Adrenal gland (tissue), 19 donors: ENCODE measurements at regions of chr3 and their contacts with region 1.

Region 1: DNA sequence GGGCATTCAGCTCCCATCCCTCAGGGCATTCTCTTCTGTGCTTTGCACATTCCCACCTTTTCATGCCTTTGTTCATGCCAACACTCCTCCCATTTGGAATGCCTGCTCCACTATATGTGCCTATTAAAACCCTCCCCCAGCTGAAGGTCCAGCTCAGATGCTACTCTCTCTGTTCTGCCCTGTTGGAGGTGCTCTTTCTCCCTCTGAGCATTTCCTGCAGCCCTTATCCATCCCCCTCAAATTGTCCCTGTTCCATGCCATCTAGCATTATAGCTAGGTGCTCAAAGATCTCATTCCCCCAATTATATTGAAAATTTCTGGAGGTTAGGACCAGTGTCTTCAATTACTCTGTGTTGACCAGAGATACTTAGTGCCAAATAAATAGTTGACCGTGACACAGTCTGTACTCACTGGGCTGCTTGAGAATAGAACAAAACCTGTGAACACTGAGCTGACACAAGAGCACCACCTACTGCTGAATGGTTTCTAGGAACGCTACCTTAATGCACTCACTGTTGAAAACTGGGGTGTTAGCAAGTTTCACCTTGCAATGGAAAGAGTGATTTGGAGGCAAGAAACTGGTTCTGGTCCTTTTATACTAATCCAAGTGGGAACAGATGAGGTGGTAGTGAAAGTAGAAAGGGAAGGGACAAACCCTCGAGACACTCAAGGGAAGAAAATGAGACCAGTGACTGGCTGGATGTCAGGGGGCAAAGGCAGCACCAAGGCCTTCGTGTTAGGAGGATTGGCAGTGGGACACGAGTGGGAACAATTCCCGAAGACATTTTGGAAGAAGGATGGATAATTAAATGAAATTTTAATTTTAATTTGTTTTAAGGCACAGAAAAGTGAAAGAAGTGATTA is 289.8 kb upstream of the ROPN1 start:
- DNase-seq: peak in 5 of 7 donors; percentile 26 to 69 (median 57)
- H3K4me3 ChIP-seq: no peak overlapping the region
- H3K27ac ChIP-seq: no peak overlapping the region
- H3K4me1 ChIP-seq: peaks cover 4 to 16% of the 10 kb centered on the region in 2 donors
- H3K27me3 ChIP-seq: no peaks in the 10 kb centered on the region
- CTCF ChIP-seq: peak; percentile 41 to 78 (median 68)
- POLR2A ChIP-seq: no peak

Region 2: GRCh38 chr3:123899300-123899865 is 382.3 kb before region 1 on chr3:
- intact Hi-C with region 1: no loop called
- DNase-seq: no peak
- H3K4me3 ChIP-seq: no peak overlapping the region
- H3K27ac ChIP-seq: no peak overlapping the region
- H3K4me1 ChIP-seq: no peaks in the 10 kb centered on the region
- H3K27me3 ChIP-seq: no peaks in the 10 kb centered on the region
- CTCF ChIP-seq: no peak
- POLR2A ChIP-seq: no peak

Region 3: DNA sequence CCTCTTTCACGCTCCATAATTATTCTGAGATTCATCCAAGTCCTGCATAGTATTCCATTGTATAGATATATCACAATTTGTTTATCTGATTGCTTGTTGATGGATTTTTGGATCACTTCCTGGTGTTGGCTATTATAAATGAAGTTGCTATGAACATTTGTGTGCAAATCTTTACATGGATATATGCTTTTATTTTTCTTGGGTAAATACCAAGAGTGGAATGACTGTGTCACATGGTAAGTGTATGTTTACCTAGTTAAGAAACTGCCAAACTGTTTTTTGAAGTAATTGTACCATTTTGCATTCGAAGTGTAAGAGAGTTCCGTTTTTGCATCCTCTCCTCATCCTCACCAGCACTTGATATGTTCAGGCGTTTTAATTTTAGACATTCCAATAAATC is 255.2 kb before region 1 on chr3:
- intact Hi-C with region 1: loop called in 1 of 2 experiments (anchors 10 kb)
- DNase-seq: no peak
- H3K4me3 ChIP-seq: no peak overlapping the region
- H3K27ac ChIP-seq: no peak overlapping the region
- H3K4me1 ChIP-seq: no peaks in the 10 kb centered on the region
- H3K27me3 ChIP-seq: peaks cover 4% of the 10 kb centered on the region
- CTCF ChIP-seq: no peak
- POLR2A ChIP-seq: no peak

Region 4: DNA sequence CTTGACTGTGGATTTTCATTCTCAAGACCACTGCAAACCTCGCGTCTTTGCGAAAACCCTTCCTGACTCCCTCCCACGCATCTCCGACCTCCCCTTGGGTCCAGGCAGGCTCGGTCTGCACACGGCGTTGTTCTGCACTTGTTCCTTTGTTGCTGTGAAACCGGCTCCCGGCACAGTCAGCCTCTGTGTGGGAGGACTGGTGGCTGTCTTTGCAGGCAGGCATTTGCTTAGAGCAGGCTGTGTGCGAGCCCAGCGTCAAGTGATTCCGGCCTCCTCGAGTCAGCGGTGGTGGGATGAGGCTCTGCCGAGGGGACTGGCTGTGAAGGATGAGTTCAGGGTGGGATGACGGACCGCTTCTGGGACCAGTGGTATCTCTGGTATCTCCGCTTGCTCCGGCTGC is 187.2 kb before region 1 on chr3:
- intact Hi-C with region 1: loop called in 1 of 2 experiments (anchors 5 kb)
- DNase-seq: no peak
- H3K4me3 ChIP-seq: no peak overlapping the region
- H3K27ac ChIP-seq: no peak overlapping the region
- H3K4me1 ChIP-seq: no peaks in the 10 kb centered on the region
- H3K27me3 ChIP-seq: no peaks in the 10 kb centered on the region
- CTCF ChIP-seq: no peak
- POLR2A ChIP-seq: no peak

Region 5: DNA sequence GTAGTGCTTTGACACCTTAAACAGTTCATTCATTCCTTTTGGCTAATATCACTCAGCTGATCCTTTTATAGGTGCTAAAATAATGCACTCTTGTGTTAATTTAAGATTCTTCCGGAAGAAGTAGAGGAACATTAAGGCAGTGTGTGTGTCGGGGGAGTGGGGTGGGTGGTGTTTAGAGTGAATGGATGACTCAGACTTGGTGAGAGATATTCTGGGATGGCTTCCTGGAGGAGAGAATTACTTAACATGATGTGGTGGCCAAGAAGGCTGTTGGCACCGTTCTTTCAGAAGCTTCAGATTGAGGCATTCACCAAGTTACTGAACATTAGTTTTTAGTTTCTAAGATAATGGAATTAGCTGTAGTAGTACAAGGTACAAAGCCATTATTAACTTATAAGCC is 164.2 kb before region 1 on chr3:
- intact Hi-C with region 1: no loop called
- DNase-seq: peak in 2 of 7 donors; percentile 9 to 24
- H3K4me3 ChIP-seq: no peak overlapping the region
- H3K27ac ChIP-seq: no peak overlapping the region
- H3K4me1 ChIP-seq: peaks cover 10 to 27% of the 10 kb centered on the region in 2 donors
- H3K27me3 ChIP-seq: no peaks in the 10 kb centered on the region
- CTCF ChIP-seq: no peak
- POLR2A ChIP-seq: no peak

Region 6: GRCh38 chr3:124329723-124330122 is 48.0 kb after region 1 on chr3:
- intact Hi-C with region 1: no loop called
- DNase-seq: no peak
- H3K4me3 ChIP-seq: no peak overlapping the region
- H3K27ac ChIP-seq: no peak overlapping the region
- H3K4me1 ChIP-seq: no peaks in the 10 kb centered on the region
- H3K27me3 ChIP-seq: no peaks in the 10 kb centered on the region
- CTCF ChIP-seq: no peak
- POLR2A ChIP-seq: no peak

Region 7: DNA sequence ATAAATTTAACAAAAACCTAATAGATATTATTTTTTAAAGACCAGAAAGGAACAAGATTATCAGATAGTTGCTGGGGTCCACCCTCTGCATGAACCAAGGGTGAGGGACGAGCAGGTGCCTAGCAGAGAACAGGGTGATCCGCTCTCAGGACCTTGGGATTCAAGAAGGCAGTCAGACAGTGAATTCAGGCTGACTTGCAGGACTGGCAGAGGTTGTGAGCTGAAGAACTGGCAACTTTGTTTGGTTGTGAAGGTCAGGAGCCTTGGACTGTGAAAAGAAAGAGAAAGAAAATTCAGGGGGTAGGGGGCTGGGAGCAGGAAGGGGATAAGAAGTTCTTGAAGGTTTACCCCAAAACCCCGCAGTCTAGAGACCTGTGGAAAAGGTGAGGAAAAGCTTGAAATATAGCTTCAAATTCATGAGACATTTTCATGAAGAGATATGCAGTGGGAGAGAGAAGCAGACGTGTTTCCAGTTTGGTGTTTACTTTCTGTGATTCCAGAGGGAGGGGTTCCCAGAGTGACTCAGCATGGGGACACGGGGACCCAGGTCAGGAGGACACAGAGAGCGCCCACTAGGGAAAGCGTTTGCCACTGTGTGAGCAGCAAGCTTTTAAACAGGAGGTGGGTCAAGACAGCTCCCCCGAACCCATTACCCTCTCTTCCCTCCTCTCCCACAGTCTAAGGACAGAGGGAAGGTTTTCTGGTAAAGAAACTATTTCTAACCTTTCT is 231.4 kb after region 1 on chr3:
- intact Hi-C with region 1: no loop called
- DNase-seq: peak; percentile 39 to 66 (median 56)
- H3K4me3 ChIP-seq: peak overlapping the region in 1 of 4 donors; percentile 13
- H3K27ac ChIP-seq: peak overlapping the region in 4 of 5 donors; percentile 49 to 75 (median 66)
- H3K4me1 ChIP-seq: peaks cover 14 to 18% of the 10 kb centered on the region in 2 donors
- H3K27me3 ChIP-seq: no peaks in the 10 kb centered on the region
- CTCF ChIP-seq: no peak
- POLR2A ChIP-seq: no peak